ENCODE measurements at regions of chr2 and their contacts with region 1.

Region 1: GRCh38 chr2:3558205-3559014 is at the start of gene RNASEH1:
- DNase-seq: peak; percentile 99
- H3K4me3 Mint-ChIP-seq: peak within 1 kb of the TSS; percentile 86
- H3K27ac Mint-ChIP-seq: peak within 1 kb of the TSS; percentile 93
- H3K4me1 Mint-ChIP-seq: peaks cover 30% of the 10 kb centered on the region
- H3K27me3 Mint-ChIP-seq: no peaks in the 10 kb centered on the region
- total RNA-seq, gene RNASEH1: 23.6 to 24.8 TPM

Region 2: GRCh38 chr2:3379647-3380534 is 178.5 kb before region 1 on chr2 and contains the start of gene TRAPPC12:
- CTCF ChIA-PET with region 1: no interaction called
- POLR2A ChIA-PET with region 1: interaction called, 3 read pairs
- intact Hi-C with region 1: loop called (anchors 1 kb)
- DNase-seq: peak; percentile 95
- H3K4me3 Mint-ChIP-seq: peak within 1 kb of the TSS; percentile 98
- H3K27ac Mint-ChIP-seq: peak within 1 kb of the TSS; percentile 97
- H3K4me1 Mint-ChIP-seq: peaks cover 39% of the 10 kb centered on the region
- H3K27me3 Mint-ChIP-seq: no peaks in the 10 kb centered on the region
- total RNA-seq, gene TRAPPC12: 61.4 to 64.3 TPM

Region 3: DNA sequence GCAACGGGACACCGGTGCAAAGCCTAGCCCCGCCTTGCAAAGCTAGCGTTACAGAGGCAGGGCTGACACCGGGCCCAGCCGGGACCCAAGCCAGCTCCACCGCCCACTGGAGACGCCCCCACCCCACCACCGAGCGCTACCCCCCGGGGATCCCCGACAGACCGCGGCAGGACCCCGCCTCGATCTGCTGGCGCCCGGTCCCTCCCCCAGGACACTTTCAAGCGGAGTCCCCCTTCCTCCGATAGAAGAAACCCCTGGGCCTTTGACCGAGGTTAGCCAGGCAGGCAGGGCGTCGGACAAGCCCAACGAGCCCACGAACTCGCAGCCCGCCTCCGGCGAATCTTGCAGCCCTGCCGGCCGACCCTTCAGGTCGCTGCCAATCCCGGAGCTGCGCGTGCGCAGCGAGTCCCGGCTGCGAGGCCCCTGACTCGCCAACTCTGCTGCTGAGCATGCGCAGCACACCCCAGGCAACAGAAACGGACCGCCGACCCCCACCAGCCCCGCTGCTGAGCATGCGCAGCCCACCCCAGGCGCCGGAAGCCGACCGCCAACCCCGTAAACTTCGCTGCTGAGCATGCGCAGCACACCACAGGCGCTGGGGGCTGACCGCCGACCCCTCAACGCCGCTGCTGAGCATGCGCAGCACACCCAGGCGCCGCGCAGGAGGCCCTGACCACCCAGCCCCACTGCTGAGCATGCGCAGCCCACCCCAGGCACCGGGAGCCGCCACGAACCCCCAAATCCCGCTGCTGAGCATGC is 39.7 kb before region 1 on chr2:
- CTCF ChIA-PET with region 1: no interaction called
- POLR2A ChIA-PET with region 1: interaction called, 16 read pairs
- intact Hi-C with region 1: loop called (anchors 1 kb)
- DNase-seq: peak; percentile 99
- H3K4me3 Mint-ChIP-seq: peak overlapping the region; percentile 84
- H3K27ac Mint-ChIP-seq: peak overlapping the region; percentile 89
- H3K4me1 Mint-ChIP-seq: peaks cover 38% of the 10 kb centered on the region
- H3K27me3 Mint-ChIP-seq: no peaks in the 10 kb centered on the region

Region 4: GRCh38 chr2:3604991-3605961 is 46.9 kb after region 1 on chr2:
- CTCF ChIA-PET with region 1: no interaction called
- POLR2A ChIA-PET with region 1: no interaction called
- intact Hi-C with region 1: loop called (anchors 5 kb)
- DNase-seq: peak; percentile 77
- H3K4me3 Mint-ChIP-seq: peak overlapping the region; percentile 66
- H3K27ac Mint-ChIP-seq: peak overlapping the region; percentile 71
- H3K4me1 Mint-ChIP-seq: peaks cover 12% of the 10 kb centered on the region
- H3K27me3 Mint-ChIP-seq: no peaks in the 10 kb centered on the region

Measured in activated CD4-positive, alpha-beta memory T cell treated with anti-CD3 and anti-CD28 coated beads for 36 hours (primary cell).